Activated B cell treated with CpG ODN at 0.5 μM for 24 hours (primary cell): ENCODE measurements at regions of chr11 and their contacts with region 1.

Region 1: DNA sequence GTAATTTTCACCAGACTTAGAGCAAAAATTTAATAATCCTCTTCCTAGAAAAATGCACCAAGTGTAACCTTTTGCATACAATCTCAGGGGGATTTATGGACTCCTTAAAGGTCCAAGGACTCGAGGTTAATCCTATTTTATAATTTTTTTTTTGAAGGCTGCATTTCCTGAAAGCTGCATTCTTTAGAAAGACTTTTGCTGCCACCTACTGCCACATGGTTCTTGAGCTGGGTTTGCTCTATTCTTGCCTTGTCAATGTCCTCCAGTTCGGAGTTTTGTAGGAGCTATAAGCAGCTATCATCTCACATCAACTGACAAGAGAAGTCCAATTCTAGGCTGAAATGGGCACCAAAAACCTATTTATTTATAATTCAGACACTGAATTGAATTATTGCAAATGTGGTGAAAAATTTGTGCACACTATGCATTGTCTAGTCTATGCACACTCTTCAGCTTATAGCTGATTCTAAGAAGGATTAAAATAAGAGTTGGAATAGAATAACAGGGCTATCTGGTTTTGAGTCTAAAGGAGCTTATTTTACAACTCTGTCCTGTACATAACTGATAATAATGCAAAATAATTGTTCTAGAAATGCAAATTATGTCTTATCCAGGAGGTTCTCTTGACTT is 31.3 kb downstream of the TRAF6 start:
- DNase-seq: no peak
- ATAC-seq: no peak
- H3K4me3 Mint-ChIP-seq: no peak overlapping the region
- H3K27ac Mint-ChIP-seq: no peak overlapping the region
- H3K4me1 Mint-ChIP-seq: no peaks in the 10 kb centered on the region
- H3K27me3 Mint-ChIP-seq: no peaks in the 10 kb centered on the region
- CTCF ChIP-seq: no peak

Region 2: GRCh38 chr11:36306888-36307287 is 171.9 kb before region 1 on chr11:
- CTCF ChIA-PET with region 1: interaction called, 7 read pairs
- POLR2A ChIA-PET with region 1: no interaction called
- intact Hi-C with region 1: loop called (anchors 1 kb)
- DNase-seq: no peak
- ATAC-seq: no peak
- H3K4me3 Mint-ChIP-seq: no peak overlapping the region
- H3K27ac Mint-ChIP-seq: no peak overlapping the region
- H3K4me1 Mint-ChIP-seq: no peaks in the 10 kb centered on the region
- H3K27me3 Mint-ChIP-seq: peaks cover 2% of the 10 kb centered on the region
- CTCF ChIP-seq: no peak

Region 3: GRCh38 chr11:36512016-36512415 is 33.2 kb after region 1 on chr11:
- CTCF ChIA-PET with region 1: no interaction called
- POLR2A ChIA-PET with region 1: no interaction called
- intact Hi-C with region 1: no loop called
- DNase-seq: no peak
- ATAC-seq: no peak
- H3K4me3 Mint-ChIP-seq: peak overlapping the region; percentile 11
- H3K27ac Mint-ChIP-seq: no peak overlapping the region
- H3K4me1 Mint-ChIP-seq: peaks cover 19% of the 10 kb centered on the region
- H3K27me3 Mint-ChIP-seq: peaks cover 16% of the 10 kb centered on the region
- CTCF ChIP-seq: no peak